ENCODE measurements at regions of chr13 and their contacts with region 1.

Region 1: DNA sequence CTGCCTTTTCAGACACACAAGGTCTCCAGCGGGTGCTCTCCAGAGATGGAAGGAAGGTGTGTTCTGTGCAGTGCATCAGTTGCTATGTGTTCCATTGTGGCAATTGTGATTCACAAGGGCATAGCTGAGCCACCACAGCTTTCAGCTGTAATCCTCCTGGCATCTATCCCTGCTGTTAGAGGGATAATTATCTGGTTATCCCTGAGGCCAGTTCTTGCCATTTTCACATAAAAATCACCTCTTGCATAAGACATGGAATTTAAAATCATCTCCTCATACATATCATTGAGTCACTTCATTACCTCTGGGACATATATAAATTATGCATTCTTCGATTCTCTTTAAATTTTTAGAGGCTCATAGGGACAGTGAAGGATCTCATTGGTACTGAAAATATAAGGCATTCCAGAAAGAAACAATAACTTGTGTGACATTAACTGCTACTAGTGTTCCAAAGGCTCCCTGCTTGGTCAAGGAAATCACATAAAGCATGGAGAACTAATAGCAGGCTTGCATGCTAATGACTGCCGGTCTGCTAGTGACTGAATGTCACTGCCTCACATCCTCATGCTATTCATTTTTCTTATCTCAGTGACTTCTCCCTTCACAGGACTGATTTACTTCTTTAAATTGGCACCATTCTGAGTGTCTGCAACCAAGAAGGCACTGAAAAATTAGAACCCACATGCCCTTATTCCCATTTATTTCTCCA is 214.0 kb downstream of the ENOX1 start:
- DNase-seq: no peak
- H3K4me3 Mint-ChIP-seq: no peak overlapping the region
- H3K27ac Mint-ChIP-seq: no peak overlapping the region
- H3K4me1 Mint-ChIP-seq: peaks cover 6% of the 10 kb centered on the region
- H3K27me3 Mint-ChIP-seq: peaks cover 5% of the 10 kb centered on the region

Region 2: DNA sequence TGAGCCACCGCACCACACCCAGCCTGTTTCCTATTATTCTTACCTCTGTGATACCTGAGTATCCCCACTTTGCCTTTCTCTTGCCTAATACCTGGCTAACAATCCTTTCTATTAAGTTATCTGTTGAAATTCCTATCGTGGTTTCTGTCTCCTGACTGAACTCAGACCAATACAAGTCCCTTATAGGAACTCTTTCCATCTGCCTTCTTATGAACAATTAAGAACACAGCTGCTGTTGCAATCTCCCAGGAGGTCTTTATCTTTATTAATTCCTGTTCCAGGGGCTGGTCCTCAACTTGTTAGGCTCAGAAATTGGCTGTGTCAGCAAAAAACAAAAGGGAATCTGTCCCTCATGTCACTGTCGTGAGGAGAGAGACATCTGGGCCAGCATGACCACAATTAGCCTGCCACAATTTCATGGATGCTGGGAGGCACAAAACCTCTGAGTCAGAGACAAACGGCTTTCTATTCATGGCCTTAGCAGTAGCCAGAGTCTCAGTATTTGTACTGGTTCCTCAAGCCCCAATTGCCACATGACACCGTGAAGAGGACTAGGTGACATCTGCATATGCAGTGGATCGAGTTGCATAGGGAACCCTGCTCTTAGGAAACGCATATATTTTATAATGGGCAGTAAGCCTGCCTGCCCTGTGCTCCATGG is 1358.3 kb after region 1 on chr13:
- intact Hi-C with region 1: loop called (anchors 10 kb)
- DNase-seq: no peak
- H3K4me3 Mint-ChIP-seq: no peak overlapping the region
- H3K27ac Mint-ChIP-seq: no peak overlapping the region
- H3K4me1 Mint-ChIP-seq: peaks cover 9% of the 10 kb centered on the region
- H3K27me3 Mint-ChIP-seq: peaks cover 16% of the 10 kb centered on the region